ENCODE measurements at regions of chr6 and their contacts with region 1.

Region 1: GRCh38 chr6:156719720-156720563 is 57.2 kb upstream of the ARID1B start:
- DNase-seq: peak; percentile 97
- H3K4me3 Mint-ChIP-seq: peak overlapping the region; percentile 68
- H3K27ac Mint-ChIP-seq: peak overlapping the region; percentile 97
- H3K4me1 Mint-ChIP-seq: peaks cover 22% of the 10 kb centered on the region
- H3K27me3 Mint-ChIP-seq: no peaks in the 10 kb centered on the region
- CTCF ChIP-seq: no peak

Region 2: GRCh38 chr6:156617376-156617775 is 102.6 kb before region 1 on chr6:
- CTCF ChIA-PET with region 1: no interaction called
- POLR2A ChIA-PET with region 1: interaction called, 10 read pairs
- intact Hi-C with region 1: no loop called
- DNase-seq: peak; percentile 91
- H3K4me3 Mint-ChIP-seq: no peak overlapping the region
- H3K27ac Mint-ChIP-seq: no peak overlapping the region
- H3K4me1 Mint-ChIP-seq: peaks cover 16% of the 10 kb centered on the region
- H3K27me3 Mint-ChIP-seq: no peaks in the 10 kb centered on the region
- CTCF ChIP-seq: no peak

Region 3: GRCh38 chr6:156699017-156699421 is 20.9 kb before region 1 on chr6:
- CTCF ChIA-PET with region 1: interaction called, 3 read pairs
- POLR2A ChIA-PET with region 1: interaction called, 17 read pairs
- intact Hi-C with region 1: no loop called
- DNase-seq: peak; percentile 90
- H3K4me3 Mint-ChIP-seq: no peak overlapping the region
- H3K27ac Mint-ChIP-seq: no peak overlapping the region
- H3K4me1 Mint-ChIP-seq: peaks cover 11% of the 10 kb centered on the region
- H3K27me3 Mint-ChIP-seq: no peaks in the 10 kb centered on the region
- CTCF ChIP-seq: no peak

Region 4: GRCh38 chr6:156771047-156771446 is 51.1 kb after region 1 on chr6:
- CTCF ChIA-PET with region 1: interaction called, 7 read pairs
- POLR2A ChIA-PET with region 1: interaction called, 196 read pairs
- intact Hi-C with region 1: no loop called
- DNase-seq: no peak
- H3K4me3 Mint-ChIP-seq: no peak overlapping the region
- H3K27ac Mint-ChIP-seq: no peak overlapping the region
- H3K4me1 Mint-ChIP-seq: peaks cover 12% of the 10 kb centered on the region
- H3K27me3 Mint-ChIP-seq: no peaks in the 10 kb centered on the region
- CTCF ChIP-seq: no peak

Region 5: DNA sequence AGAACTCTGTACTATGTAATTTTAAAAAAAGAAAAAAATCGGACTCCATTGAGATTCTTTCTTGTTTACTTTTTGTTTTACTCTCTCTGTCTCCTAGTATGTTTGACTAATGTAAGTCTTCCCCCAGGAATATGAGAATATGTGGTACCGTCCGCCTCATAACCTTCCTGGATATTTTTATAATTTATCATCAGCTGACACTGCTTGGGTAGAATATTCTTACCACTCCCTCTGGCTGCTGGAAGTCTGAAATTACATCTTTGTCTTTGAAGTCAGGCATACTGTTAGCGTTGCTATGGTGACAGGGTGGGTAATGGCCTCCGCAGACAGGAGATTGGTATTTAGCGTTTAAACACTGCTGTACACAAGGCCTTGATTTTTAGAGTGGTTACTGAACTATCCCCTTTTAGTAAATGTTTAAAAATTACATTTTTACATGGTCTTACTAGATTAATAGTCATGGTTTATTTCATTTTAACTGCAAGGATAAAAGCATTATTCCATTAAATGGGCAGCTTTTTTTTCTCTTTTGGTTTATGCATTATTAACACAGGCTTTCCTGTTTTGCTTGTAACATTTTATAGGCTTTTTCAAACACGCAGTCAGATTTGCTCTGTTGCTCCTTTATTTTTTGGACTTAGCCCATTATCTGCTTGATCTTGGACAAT is 233.7 kb after region 1 on chr6:
- CTCF ChIA-PET with region 1: interaction called, 7 read pairs
- POLR2A ChIA-PET with region 1: interaction called, 15 read pairs
- intact Hi-C with region 1: no loop called
- DNase-seq: peak; percentile 90
- H3K4me3 Mint-ChIP-seq: peak overlapping the region; percentile 58
- H3K27ac Mint-ChIP-seq: peak overlapping the region; percentile 93
- H3K4me1 Mint-ChIP-seq: peaks cover 56% of the 10 kb centered on the region
- H3K27me3 Mint-ChIP-seq: no peaks in the 10 kb centered on the region
- CTCF ChIP-seq: no peak

Region 6: GRCh38 chr6:157034436-157035230 is 314.7 kb after region 1 on chr6:
- CTCF ChIA-PET with region 1: no interaction called
- POLR2A ChIA-PET with region 1: interaction called, 12 read pairs
- intact Hi-C with region 1: no loop called
- DNase-seq: peak; percentile 69
- H3K4me3 Mint-ChIP-seq: peak overlapping the region; percentile 72
- H3K27ac Mint-ChIP-seq: no peak overlapping the region
- H3K4me1 Mint-ChIP-seq: peaks cover 23% of the 10 kb centered on the region
- H3K27me3 Mint-ChIP-seq: no peaks in the 10 kb centered on the region
- CTCF ChIP-seq: peak; percentile 42